ENCODE measurements at regions of chr19 and their contacts with region 1.

Region 1: GRCh38 chr19:35822579-35822978 is 9.9 kb upstream of the PRODH2 start:
- DNase-seq: no peak
- H3K4me3 Mint-ChIP-seq: no peak overlapping the region
- H3K27ac Mint-ChIP-seq: no peak overlapping the region
- H3K4me1 Mint-ChIP-seq: peaks cover 5% of the 10 kb centered on the region
- H3K27me3 Mint-ChIP-seq: peaks cover 12% of the 10 kb centered on the region

Region 2: DNA sequence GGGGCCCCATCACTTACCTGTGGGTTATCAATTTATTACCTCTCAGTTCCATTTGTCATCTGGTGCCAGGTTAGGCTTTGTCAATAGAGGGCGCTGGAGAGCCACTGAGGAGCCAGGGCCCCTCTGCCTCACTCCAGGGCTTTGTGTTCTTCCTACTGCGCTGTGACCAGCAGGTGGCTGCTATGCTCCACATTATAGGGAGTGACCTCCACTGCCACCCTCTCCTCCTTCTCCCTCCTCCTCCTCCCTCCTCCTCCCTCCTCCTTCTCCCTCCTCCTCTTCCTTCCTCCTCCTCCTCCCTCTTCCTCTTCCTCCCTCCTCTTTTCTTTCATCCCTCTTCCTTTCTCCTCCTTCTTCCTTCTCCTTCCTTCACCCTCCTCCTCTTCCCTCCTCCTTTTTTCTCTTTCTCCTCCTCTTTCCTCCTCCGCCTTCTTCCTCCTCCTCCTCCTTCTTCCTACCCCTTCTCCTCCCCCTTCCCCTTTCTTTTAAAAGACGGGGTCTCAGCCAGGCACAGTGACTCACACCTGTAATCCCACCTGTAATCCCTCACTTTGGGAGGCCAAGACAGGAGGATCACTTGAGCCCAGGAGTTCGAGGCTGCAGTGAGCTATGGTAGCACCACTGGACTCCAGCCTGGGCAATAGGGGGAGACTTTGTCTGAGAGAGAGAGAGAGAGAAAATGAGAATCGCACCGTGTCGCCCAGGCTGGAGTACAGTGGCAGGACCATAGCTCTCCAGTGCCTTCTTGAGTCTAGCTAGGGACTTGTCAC is 128.6 kb before region 1 on chr19:
- CTCF ChIA-PET with region 1: interaction called, 17 read pairs
- POLR2A ChIA-PET with region 1: no interaction called
- DNase-seq: peak; percentile 93
- H3K4me3 Mint-ChIP-seq: no peak overlapping the region
- H3K27ac Mint-ChIP-seq: peak overlapping the region; percentile 52
- H3K4me1 Mint-ChIP-seq: peaks cover 19% of the 10 kb centered on the region
- H3K27me3 Mint-ChIP-seq: peaks cover 3% of the 10 kb centered on the region

Region 3: GRCh38 chr19:35899547-35900214 is 77.1 kb after region 1 on chr19:
- CTCF ChIA-PET with region 1: no interaction called
- POLR2A ChIA-PET with region 1: no interaction called
- DNase-seq: peak; percentile 90
- H3K4me3 Mint-ChIP-seq: peak overlapping the region; percentile 94
- H3K27ac Mint-ChIP-seq: peak overlapping the region; percentile 95
- H3K4me1 Mint-ChIP-seq: peaks cover 55% of the 10 kb centered on the region
- H3K27me3 Mint-ChIP-seq: no peaks in the 10 kb centered on the region